ENCODE measurements at regions of chr9 and their contacts with region 1.

Region 1: GRCh38 chr9:37592108-37592951 is at the start of gene TOMM5:
- DNase-seq: peak; percentile 98
- H3K4me3 ChIP-seq: peak within 1 kb of the TSS; percentile 93
- H3K27ac ChIP-seq: peak within 1 kb of the TSS; percentile 88
- H3K4me1 ChIP-seq: peaks cover 4% of the 10 kb centered on the region
- H3K27me3 ChIP-seq: no peaks in the 10 kb centered on the region
- total RNA-seq, gene TOMM5: 122 and 130 TPM in 2 replicates

Region 2: DNA sequence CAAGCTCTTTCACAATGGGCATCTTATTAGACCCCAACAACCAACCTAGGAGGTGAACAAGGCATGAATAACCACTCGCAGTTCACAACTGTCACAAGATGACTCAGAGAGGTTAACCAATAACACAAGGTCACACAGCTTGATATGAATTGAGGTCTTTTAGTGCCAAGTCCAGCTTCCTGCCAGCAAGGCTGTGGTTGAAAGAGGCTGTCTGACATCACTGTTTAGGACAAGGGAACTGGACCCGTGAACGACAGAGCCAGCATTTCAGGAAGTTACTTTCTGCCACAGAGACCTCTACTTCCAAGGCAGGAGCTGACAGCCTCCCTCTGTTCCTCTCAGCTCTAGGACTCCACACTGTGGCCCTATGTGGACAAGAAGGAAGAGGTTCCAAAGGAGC is 746.8 kb after region 1 on chr9:
- in situ Hi-C with region 1: loop called (anchors 25 kb)
- DNase-seq: peak; percentile 82
- H3K4me3 ChIP-seq: 0 out of 2 replicates have a peak overlapping the region, but pooled peaks have one; percentile 10
- H3K27ac ChIP-seq: peak overlapping the region; percentile 50
- H3K4me1 ChIP-seq: peaks cover 7% of the 10 kb centered on the region
- H3K27me3 ChIP-seq: peaks cover 43% of the 10 kb centered on the region

Measured in GM23248 (cell line).